ENCODE measurements at regions of chr12 and their contacts with region 1.

Region 1: DNA sequence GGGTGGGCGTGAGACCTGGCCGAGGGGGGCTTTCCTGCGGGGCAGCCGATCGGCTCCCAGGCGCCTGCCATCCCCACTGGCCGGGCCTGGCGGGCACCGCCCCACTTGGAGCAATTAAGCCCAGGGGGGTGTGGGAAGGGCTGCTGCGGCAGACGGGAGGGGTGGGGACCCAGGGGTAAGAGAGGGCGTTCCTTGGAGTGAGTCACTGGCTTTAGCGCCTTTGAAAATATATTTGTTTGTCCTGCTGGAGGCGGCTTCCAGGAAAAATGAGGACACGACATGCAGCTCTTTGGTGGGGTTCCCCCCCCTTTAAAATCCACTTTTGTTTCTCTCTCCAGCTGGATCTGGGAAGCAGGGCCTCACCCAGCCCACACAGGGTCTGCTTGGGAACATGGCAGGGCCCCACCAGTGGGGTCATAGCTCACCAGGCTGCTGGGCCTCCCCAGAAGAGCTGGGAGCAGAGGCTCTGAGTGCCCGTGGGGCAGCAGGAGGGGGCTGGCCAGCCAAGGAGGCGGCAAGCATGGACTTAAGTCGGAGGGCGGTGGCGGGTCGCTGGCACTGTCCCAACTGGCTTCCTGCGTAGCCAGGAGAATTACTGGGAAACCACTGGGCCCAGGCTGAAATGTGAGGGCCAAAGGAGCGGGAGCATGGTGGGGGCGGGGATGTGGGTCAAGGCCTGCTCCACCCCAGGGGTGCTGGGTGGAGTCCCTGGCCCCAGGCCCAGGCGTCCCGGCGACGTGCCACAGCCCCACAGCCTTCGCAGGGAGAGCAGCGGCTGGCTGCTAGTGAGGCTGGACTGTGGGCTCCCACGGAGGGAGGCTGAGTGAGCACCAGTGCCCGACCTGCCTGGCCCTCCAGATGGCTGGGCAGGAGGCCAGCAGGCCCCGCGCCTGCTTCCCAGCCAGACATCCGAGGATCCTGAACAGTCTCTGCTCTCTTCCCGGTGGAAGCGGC is 128.0 kb downstream of the RFLNA start:
- DNase-seq: peak; percentile 62 to 94
- H3K4me3 ChIP-seq: peak overlapping the region; percentile 42 to 54
- H3K27ac ChIP-seq: peak overlapping the region; percentile 91 to 94
- H3K4me1 ChIP-seq: peaks cover 10 to 31% of the 10 kb centered on the region in 2 donors
- H3K27me3 ChIP-seq: no peaks in the 10 kb centered on the region
- CTCF ChIP-seq: no peak

Region 2: DNA sequence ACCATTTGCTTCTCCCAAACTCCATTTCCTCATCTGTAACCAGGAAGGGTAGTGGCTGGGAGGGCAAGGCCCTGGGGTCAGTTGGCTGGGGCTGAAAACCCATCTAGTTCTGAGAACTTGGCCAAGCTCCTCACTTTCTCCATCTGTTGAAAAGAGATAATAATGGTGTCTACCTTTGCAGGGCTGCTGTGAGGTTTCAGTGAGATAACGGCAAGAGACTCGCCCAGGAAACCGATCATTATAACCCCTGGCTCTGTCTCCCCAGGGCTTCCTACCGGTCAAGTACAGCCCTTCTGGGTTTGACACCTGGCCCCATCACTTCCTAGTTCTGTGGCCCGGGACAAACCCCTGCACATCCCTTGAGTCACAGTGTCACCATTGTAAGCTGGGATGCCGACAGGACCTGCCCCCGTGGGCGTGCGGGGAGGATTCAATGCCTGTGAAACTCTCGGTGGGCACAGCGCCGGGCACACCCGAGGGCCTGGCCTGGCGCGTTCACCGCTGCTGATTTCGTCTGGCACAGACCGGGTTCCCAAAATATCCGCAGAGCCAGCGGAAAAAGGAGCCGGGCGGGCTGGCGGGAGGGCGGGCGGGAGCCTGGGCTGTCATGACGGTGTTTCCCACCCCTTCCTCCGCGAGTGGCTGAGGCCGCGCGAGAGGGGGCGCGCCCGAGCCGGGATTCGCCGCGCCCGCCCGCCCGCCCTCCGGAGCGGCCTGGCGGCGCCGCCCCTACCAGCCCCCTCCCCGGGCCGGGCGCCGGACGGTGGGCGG is 1034.5 kb before region 1 on chr12:
- intact Hi-C with region 1: loop called (anchors 10 kb)
- DNase-seq: peak; percentile 33 to 90
- H3K4me3 ChIP-seq: peak overlapping the region; percentile 57 to 71
- H3K27ac ChIP-seq: peak overlapping the region; percentile 84 to 93
- H3K4me1 ChIP-seq: peaks cover 11 to 41% of the 10 kb centered on the region in 2 donors
- H3K27me3 ChIP-seq: no peaks in the 10 kb centered on the region
- CTCF ChIP-seq: peak in 1 of 3 experiments; percentile 25

Region 3: GRCh38 chr12:124172636-124173035 is 250.2 kb before region 1 on chr12:
- intact Hi-C with region 1: no loop called
- DNase-seq: no peak
- H3K4me3 ChIP-seq: no peak overlapping the region
- H3K27ac ChIP-seq: no peak overlapping the region
- H3K4me1 ChIP-seq: no peaks in the 10 kb centered on the region
- H3K27me3 ChIP-seq: no peaks in the 10 kb centered on the region
- CTCF ChIP-seq: no peak

Region 4: DNA sequence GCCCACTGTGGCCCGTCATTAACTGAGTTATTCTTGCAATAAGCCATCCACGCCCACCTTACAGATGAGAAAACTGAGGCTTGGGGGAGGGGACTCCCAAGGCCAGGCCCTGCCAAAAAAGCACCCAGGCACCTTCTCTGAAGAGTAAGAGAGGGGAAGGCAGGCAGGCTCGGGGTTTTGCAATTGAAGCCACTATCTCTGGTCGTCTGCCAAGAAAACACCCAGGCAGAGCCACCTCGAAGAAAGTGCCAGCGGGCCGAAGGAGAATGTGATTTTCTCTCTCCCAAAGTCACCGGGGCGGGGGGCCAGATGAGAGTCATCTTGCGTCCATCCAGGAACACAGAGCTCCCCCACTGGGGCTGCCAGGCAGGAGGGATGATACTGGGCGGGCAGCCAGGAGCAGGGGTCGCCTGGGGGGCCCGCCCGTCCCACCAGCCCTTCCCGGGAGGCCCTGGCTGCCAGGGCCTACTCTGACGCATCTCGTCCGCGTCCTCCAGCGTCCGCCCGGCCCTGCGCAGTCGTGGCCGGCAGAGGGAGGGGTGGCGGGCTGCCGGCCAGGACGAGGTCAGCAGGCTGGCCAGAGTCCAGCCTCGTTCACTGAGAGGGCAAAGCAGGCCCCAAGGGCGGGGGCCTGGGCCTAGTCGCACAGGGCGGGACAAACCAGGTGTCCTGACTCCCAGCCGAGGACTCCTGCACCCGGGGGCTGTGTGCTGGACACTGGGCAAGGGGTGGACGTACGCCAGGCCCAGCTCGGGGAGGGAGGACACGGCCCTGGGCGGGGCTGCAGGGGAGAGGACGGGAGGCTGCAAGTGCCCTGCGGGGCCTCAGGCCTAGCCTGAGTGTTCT is 53.6 kb before region 1 on chr12:
- intact Hi-C with region 1: loop called (anchors 1 kb)
- DNase-seq: peak; percentile 61 to 95
- H3K4me3 ChIP-seq: peak overlapping the region in 1 of 2 donors; percentile 37
- H3K27ac ChIP-seq: peak overlapping the region; percentile 83 to 87
- H3K4me1 ChIP-seq: peaks cover 26 to 34% of the 10 kb centered on the region in 2 donors
- H3K27me3 ChIP-seq: no peaks in the 10 kb centered on the region
- CTCF ChIP-seq: peak; percentile 46 to 73 (median 49)

Region 5: GRCh38 chr12:124379938-124380754 is 42.7 kb before region 1 on chr12:
- intact Hi-C with region 1: loop called (anchors 1 kb)
- DNase-seq: peak; percentile 73 to 96
- H3K4me3 ChIP-seq: peak overlapping the region in 1 of 2 donors; percentile 11
- H3K27ac ChIP-seq: peak overlapping the region; percentile 89 to 90
- H3K4me1 ChIP-seq: peaks cover 15 to 38% of the 10 kb centered on the region in 2 donors
- H3K27me3 ChIP-seq: no peaks in the 10 kb centered on the region
- CTCF ChIP-seq: peak; percentile 59 to 79 (median 67)

Region 6: DNA sequence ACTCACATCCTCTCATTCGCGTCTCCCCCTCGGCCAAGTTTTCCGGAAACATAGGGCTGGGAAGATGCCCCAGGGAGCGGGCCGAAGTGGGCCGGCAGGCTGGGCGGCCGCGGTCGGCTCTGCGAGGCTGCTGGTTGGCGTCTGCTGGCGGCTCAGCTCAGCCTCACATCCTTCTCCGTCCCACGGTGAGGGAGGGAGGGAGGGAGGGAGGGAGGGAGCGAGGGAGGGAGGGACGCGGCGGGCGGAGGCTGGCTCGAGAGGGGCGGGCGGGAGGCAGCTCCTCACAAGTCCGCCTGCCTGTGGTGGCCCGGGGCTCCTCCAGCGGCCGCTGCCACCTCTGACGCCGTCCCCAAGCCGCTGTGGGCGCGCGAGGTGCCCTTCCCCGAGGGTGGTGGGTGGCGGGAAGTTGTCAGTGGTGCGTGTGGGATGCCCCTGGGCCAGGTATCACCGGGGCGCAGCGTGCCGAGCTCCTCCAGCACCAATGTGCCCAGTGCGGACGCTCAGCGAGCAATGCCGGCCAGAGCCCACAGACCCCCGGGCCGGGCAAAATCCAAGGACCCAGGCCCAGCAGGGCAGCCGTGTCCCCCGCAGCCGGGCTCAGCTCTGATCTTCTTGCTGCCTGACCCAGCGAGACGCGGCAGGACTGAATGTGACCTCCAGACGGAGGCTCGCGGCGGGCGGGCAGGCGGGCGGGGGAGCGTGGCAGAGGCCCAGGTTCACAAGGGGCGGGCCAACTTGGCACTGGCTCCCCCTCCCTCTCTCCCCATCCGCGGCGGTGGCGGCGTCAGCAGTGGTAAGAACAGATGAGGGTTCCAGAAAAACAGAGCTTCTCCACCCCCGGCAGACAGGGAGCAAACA is 33.9 kb before region 1 on chr12:
- intact Hi-C with region 1: loop called (anchors 1 kb)
- DNase-seq: peak; percentile 70 to 95
- H3K4me3 ChIP-seq: peak overlapping the region; percentile 59 to 67
- H3K27ac ChIP-seq: peak overlapping the region; percentile 90 to 94
- H3K4me1 ChIP-seq: peaks cover 36 to 66% of the 10 kb centered on the region in 2 donors
- H3K27me3 ChIP-seq: no peaks in the 10 kb centered on the region
- CTCF ChIP-seq: peak in 2 of 3 experiments; percentile 7 to 9